ENCODE measurements at regions of chr1 and their contacts with region 1.

Region 1: DNA sequence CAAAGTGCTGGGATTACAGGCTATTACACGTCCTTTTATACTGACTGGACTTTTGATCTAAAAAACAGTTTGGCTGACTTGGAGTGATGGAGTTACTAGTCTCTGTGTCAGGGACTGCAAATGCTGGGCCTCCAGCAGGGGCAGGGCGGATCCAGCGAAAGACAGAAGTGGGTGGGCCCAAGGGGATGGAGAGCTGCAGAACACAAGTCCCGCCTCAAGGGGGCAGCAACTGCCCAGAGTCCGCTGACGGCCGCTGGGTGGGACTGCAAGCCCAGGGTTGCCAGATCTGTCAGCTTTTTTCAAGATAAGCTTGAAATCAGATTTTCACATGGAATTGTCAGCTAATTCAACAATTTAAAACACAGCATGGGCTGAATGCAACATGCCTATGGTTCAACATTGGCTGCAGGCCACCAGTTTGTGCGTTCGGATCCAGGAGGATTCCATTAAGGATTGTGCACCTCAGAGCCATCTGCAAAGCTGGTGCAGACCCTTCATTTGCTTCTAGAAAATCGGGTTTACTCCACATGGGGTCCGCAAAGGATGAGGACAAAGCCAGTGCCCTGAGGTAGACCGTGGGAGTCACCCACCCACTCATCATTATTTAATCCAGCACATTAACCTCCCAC is 10.7 kb downstream of the STMN1 start:
- DNase-seq: peak; percentile 91
- H3K4me3 Mint-ChIP-seq: no peak overlapping the region
- H3K27ac Mint-ChIP-seq: peak overlapping the region; percentile 38
- H3K4me1 Mint-ChIP-seq: peaks cover 36% of the 10 kb centered on the region
- H3K27me3 Mint-ChIP-seq: no peaks in the 10 kb centered on the region

Region 2: DNA sequence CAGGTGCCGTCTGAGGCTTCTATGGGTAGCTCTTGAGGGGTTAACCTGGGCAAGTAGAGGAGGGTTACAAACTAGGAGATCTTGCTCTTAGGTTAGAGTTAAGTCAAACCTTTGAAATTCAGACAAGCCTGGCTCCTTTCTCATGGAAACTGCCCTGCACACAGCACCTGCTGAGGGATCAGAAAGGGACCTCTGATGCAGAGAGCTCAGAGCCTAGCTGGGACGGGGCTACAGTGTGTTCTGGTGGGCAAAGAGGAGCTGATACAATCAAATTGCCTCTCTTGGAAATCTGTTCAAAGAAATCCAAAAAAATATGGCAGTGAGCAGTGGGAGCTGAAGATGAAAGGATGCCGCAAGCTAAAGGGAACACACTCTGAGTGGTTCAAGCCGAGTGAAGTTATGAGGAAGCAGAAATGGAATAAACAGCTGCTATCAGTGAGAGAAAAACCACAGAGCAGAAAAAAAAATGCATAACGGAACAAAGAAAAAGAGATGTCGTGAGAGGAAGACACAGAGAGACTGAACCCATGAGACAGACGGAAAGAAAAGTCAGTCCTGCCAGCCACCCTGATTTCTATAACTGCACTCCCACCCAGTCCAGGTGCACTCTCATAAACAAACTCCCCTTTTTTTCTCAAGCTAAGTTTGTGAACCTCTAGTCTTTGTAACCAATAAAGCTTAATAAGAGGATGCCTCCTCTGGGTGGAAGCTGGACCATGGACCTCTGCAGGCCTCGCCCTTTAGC is 75.8 kb after region 1 on chr1:
- CTCF ChIA-PET with region 1: interaction called, 14 read pairs
- POLR2A ChIA-PET with region 1: interaction called, 4 read pairs
- DNase-seq: no peak
- H3K4me3 Mint-ChIP-seq: no peak overlapping the region
- H3K27ac Mint-ChIP-seq: peak overlapping the region; percentile 72
- H3K4me1 Mint-ChIP-seq: peaks cover 19% of the 10 kb centered on the region
- H3K27me3 Mint-ChIP-seq: no peaks in the 10 kb centered on the region

Region 3: GRCh38 chr1:25990702-25991395 is 95.4 kb after region 1 on chr1:
- CTCF ChIA-PET with region 1: interaction called, 286 read pairs
- POLR2A ChIA-PET with region 1: interaction called, 268 read pairs
- DNase-seq: peak; percentile 61
- H3K4me3 Mint-ChIP-seq: peak overlapping the region; percentile 78
- H3K27ac Mint-ChIP-seq: peak overlapping the region; percentile 72
- H3K4me1 Mint-ChIP-seq: peaks cover 38% of the 10 kb centered on the region
- H3K27me3 Mint-ChIP-seq: no peaks in the 10 kb centered on the region

Region 4: GRCh38 chr1:25997828-25998761 is 102.6 kb after region 1 on chr1 and contains the start of gene PAFAH2:
- CTCF ChIA-PET with region 1: interaction called, 286 read pairs
- POLR2A ChIA-PET with region 1: interaction called, 268 read pairs
- DNase-seq: peak; percentile 97
- H3K4me3 Mint-ChIP-seq: peak within 1 kb of the TSS; percentile 84
- H3K27ac Mint-ChIP-seq: peak within 1 kb of the TSS; percentile 91
- H3K4me1 Mint-ChIP-seq: peaks cover 20% of the 10 kb centered on the region
- H3K27me3 Mint-ChIP-seq: no peaks in the 10 kb centered on the region
- total RNA-seq, gene PAFAH2: 9.4 to 10.1 TPM

Region 5: DNA sequence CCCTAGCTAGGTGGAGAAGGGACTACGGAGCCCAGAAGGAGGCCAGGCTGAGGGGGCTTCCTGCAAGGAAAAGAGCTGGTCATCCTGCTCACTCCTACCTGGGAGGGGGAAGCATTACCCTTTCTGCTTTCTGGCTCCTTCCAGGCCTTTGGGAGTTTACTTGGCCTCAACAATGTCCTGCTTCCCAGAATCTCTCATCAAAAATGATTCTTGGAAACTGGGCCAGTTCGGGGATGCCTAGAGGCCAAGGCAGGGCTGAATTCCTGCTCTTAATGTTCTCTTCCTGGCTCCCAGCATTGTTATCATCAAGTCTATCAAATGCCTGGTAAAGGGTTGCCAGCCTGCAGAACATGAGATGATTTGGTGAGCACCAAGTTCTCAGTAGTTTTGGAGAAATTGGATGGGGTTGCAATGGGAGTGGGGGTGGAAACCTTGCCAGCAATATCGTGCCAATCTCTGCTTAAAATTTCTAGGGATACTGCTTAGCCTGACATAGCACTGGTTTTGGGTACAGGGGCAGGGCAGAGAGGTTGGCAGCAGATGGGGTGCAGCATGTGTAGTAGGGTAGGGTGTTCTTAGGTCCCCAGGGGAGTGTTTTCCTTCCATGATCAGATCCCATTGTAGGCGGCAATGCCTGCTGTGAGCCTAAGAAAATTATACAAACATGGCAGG is 110.1 kb after region 1 on chr1:
- CTCF ChIA-PET with region 1: interaction called, 286 read pairs
- POLR2A ChIA-PET with region 1: interaction called, 268 read pairs
- DNase-seq: no peak
- H3K4me3 Mint-ChIP-seq: no peak overlapping the region
- H3K27ac Mint-ChIP-seq: no peak overlapping the region
- H3K4me1 Mint-ChIP-seq: peaks cover 2% of the 10 kb centered on the region
- H3K27me3 Mint-ChIP-seq: peaks cover 5% of the 10 kb centered on the region

Region 6: DNA sequence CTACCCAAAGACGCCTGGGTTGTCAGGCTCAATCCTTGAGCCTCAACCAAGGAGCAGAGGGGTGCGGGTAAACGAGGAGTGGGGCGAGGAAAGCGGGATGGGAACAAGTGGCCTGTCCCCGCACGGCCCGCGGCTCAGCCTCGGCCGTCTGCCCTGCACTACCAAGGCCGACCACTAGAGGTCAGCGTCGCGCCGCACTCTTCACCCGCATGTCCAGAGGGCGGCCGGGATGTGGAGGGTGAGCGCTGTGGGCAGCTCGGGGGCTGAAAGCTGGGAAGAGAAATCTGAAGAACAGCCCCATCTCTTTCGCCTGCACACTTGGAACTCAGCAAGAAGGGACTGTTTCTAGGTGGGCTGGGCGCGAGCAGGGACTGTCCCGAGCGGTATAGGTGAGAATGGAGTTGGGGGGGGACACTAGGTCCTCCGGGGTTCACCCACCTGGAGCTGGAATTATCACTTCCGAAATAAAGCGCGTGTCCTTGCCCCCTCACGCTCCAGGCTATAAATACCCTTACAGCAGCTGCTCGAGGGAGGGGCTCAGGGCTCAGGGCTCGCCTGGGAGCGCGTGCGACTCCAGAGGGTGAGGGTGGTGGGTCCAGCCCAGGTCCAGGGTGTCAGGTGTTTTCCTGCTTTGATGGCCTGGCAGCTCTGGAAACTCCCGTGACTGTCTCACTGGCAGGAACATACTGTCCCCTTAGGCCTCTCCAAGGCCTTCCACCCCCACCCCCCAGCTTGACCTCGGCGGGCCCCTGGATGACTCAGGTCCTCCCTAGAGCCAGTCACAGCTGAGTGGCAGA is 140.7 kb after region 1 on chr1:
- CTCF ChIA-PET with region 1: interaction called, 10 read pairs
- POLR2A ChIA-PET with region 1: interaction called, 3 read pairs
- DNase-seq: peak; percentile 77
- H3K4me3 Mint-ChIP-seq: peak overlapping the region; percentile 90
- H3K27ac Mint-ChIP-seq: no peak overlapping the region
- H3K4me1 Mint-ChIP-seq: peaks cover 11% of the 10 kb centered on the region
- H3K27me3 Mint-ChIP-seq: peaks cover 21% of the 10 kb centered on the region

Measured in activated CD4-positive, alpha-beta memory T cell treated with anti-CD3 and anti-CD28 coated beads, Interleukin-2, amount 10 ng/mL, durations not matched to agents 7 days and 5 days (primary cell).